Sciatic nerve (tissue), 2 donors: ENCODE measurements at regions of chr12 and their contacts with region 1.

Region 1: GRCh38 chr12:114668151-114668885 is 15.7 kb downstream of the TBX3 start:
- DNase-seq: peak; percentile 86
- ATAC-seq: peak; percentile 93

Region 2: DNA sequence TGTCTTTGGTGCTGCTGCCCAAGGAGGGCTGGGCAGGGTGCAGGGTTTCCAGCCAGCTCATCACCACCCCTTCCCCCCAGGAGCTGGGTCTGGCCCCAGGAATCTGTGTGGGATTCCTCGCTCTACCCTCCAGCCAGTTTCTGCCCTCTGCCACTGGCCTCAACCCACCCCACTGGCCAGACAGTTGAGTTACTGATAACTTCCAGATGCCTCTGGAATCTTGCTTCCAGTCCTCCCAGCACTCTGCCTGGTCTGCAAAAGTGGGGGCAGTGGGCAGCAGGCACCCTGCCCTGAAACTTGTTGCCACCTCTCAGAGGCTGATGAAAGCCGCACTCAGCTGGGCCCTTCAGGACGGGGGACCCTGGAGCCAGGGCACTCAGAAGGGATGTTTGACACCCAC is 35.8 kb after region 1 on chr12:
- intact Hi-C with region 1: no loop called
- DNase-seq: no peak
- ATAC-seq: no peak

Region 3: GRCh38 chr12:115752913-115753726 is 1084.8 kb after region 1 on chr12:
- intact Hi-C with region 1: loop called (anchors 5 kb)
- DNase-seq: no peak
- ATAC-seq: peak; percentile 91

Region 4: DNA sequence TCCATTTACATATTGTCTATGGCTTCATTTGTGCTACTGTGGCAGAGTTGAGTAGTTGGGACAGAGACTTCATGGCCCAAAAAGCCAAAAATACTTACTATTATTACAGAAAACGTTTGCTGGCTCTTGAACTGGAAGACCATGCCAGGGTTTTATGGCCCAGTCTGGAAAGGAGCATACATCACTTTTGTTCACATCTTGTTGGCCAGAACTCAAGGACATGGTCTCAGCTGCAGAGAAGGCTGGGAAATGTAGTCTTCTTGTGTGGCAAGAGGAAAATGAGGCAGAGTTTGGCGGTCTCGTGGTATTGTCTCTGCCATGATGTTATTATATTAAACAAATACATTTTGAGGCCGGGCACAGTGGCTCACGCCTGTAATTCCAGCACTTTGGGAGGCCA is 1099.6 kb after region 1 on chr12:
- intact Hi-C with region 1: loop called (anchors 2 kb)
- DNase-seq: no peak
- ATAC-seq: no peak